PC-3 (cell line): ENCODE measurements at regions of chr13 and their contacts with region 1.

Region 1: GRCh38 chr13:110561344-110562035 is at the start of gene RAB20:
- DNase-seq: peak; percentile 72
- ATAC-seq: peak; percentile 51
- H3K4me3 ChIP-seq: peak within 1 kb of the TSS; percentile 98
- H3K27ac ChIP-seq: peak within 1 kb of the TSS; percentile 66
- H3K4me1 ChIP-seq: peaks cover 25% of the 10 kb centered on the region
- H3K27me3 ChIP-seq: no peaks in the 10 kb centered on the region
- CTCF ChIP-seq: no peak
- total RNA-seq, gene RAB20: 22.9 and 27.9 TPM in 2 replicates

Region 2: GRCh38 chr13:110455941-110456340 is 105.5 kb before region 1 on chr13:
- CTCF ChIA-PET with region 1: interaction called, 3 read pairs
- POLR2A ChIA-PET with region 1: no interaction called
- intact Hi-C with region 1: loop called (anchors 5 kb)
- DNase-seq: peak; percentile 78
- ATAC-seq: peak; percentile 99
- H3K4me3 ChIP-seq: peak overlapping the region; percentile 43; the same call in 1 of the 2 replicates
- H3K27ac ChIP-seq: no peak overlapping the region
- H3K4me1 ChIP-seq: peaks cover 7% of the 10 kb centered on the region; the same call in 1 of the 2 replicates
- H3K27me3 ChIP-seq: no peaks in the 10 kb centered on the region
- CTCF ChIP-seq: peak; percentile 88

Region 3: GRCh38 chr13:110499621-110500281 is 61.7 kb before region 1 on chr13:
- CTCF ChIA-PET with region 1: interaction called, 3 read pairs
- POLR2A ChIA-PET with region 1: interaction called, 5 read pairs
- intact Hi-C with region 1: loop called (anchors 2 kb)
- DNase-seq: peak; percentile 80
- ATAC-seq: peak; percentile 88
- H3K4me3 ChIP-seq: peak overlapping the region; percentile 25; the same call in 1 of the 2 replicates
- H3K27ac ChIP-seq: peak overlapping the region; percentile 98
- H3K4me1 ChIP-seq: peaks cover 24% of the 10 kb centered on the region
- H3K27me3 ChIP-seq: no peaks in the 10 kb centered on the region
- CTCF ChIP-seq: no peak

Region 4: DNA sequence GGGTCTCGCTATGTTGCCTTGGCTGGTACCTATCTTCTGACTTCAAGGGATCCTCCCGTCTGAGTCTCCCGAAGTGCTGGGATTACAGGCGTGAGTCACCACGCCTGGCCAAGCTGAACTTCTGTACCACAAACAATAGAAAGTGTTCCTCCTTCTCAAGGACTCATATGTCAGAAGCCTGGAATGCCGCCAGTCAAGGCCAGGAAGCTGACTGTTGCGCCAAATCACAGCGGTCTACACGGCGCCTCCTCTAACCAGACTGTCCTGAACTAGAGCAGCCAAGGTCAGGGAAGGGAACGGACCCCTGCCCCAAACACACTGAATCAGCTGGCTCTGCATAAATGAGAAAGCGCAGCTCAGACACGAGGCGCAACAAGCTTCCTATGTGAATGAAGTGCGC is 14.6 kb before region 1 on chr13:
- CTCF ChIA-PET with region 1: interaction called, 9 read pairs
- POLR2A ChIA-PET with region 1: interaction called, 4 read pairs
- intact Hi-C with region 1: loop called (anchors 1 kb)
- DNase-seq: peak; percentile 94
- ATAC-seq: peak; percentile 97
- H3K4me3 ChIP-seq: peak overlapping the region; percentile 39; the same call in 1 of the 2 replicates
- H3K27ac ChIP-seq: peak overlapping the region; percentile 67
- H3K4me1 ChIP-seq: peaks cover 23% of the 10 kb centered on the region
- H3K27me3 ChIP-seq: no peaks in the 10 kb centered on the region
- CTCF ChIP-seq: no peak